Transverse colon (tissue), 4 donors: ENCODE measurements at regions of chr20 and their contacts with region 1.

Region 1: DNA sequence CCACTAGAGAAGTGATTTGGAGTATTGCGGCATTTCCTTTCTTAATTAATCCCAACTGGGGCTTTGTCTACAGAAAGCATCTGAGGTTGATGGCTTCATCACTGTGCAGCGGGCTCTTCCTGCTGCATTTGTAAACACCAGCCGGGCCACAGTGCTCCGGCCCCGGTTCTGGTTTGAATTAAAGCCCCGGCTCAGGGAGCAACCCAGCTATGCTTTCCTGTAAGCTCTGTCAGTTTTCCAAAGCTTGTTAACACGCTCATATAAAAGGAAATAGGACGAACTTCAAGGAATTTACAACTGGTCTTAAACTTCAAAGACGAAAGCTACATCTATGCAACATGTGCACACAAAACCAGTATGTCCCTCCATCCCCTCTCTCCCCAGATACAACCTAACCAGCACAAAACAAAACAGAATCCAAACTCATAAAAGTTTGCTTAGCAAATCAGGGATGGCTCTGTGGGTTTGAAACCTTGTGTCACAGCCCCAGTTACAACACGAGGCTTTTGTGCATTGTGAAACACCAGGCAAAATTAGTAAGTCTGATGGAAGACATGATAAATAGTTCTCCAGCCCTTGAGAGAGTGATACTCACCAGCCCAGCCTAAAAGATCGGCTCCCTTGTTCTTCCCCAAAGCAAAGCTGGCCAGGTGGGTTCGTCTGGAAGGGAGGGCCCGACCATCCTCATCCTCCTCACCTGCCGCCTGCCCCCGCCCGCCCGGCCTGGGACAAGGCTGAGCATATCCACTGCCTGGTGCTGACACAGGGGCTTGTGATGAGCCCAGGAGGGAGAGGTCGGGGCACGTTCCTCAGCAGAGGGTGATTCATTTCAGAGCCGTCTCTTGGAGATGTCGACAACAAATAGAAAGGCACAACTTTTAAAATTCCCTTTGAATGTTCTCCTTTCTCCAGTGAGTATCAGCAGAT is 197.9 kb downstream of the TFAP2C start:
- DNase-seq: no peak
- H3K4me3 ChIP-seq: no peak overlapping the region
- H3K27ac ChIP-seq: peak overlapping the region; percentile 68 to 88 (median 74)
- H3K4me1 ChIP-seq: peaks cover 0 to 5% (median 2%) of the 10 kb centered on the region in 4 donors
- H3K27me3 ChIP-seq: peaks cover 16% of the 10 kb centered on the region
- CTCF ChIP-seq: no peak
- EP300 ChIP-seq: peak; percentile 45
- POLR2A ChIP-seq: no peak

Region 2: DNA sequence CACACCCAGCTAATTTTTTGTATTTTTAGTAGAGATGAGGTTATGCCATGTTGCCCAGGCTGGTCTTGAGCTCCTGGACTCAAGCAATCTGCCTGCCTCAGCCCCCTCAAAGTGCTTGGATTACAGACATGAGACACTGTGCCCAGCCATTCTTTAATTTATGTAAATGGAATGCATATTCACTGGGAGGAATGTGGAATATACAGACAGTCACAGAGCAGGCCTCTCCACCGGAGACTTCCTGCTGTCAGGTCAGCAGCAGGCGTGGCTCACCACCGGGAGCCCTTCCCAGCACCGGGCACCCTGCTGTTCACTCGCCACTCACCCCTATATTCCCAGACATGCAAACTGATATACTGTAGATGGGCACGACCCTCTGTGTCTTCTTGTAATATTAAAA is 114.8 kb before region 1 on chr20:
- in situ Hi-C with region 1: no loop called
- intact Hi-C with region 1: no loop called
- DNase-seq: no peak
- H3K4me3 ChIP-seq: no peak overlapping the region
- H3K27ac ChIP-seq: no peak overlapping the region
- H3K4me1 ChIP-seq: no peaks in the 10 kb centered on the region
- H3K27me3 ChIP-seq: no peaks in the 10 kb centered on the region
- CTCF ChIP-seq: no peak
- EP300 ChIP-seq: no peak
- POLR2A ChIP-seq: no peak

Region 3: DNA sequence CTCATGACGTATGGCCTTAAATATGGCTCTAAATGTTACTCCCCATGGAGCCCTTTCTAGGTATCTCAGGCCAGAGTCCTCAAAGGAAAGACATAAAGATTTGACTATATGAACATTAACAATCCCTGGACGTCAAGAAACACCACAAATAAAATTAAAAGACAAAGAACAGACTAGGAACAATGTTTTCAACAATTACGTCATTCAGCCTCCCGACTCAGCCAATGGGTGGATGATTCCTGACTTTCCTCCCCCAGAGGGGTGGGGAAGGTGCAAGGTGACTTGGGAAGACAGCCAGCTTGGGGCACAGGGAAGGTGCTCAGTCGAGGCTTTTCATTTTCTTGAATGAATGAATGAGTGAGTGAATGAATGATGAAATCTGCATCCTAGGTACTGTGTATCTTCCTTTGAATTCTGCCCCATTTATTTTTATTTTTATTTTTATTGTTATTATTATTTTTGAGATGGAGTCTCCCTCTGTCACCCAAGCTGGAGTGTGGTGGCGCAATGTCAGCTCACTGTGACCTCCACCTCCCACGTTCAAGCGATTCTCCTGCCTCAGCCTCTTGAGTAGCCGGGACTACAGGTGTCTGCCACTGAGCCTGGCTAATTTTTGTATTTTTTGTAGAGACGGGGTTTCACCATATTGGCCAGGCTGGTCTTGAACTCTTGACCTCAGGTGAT is 40.3 kb before region 1 on chr20:
- in situ Hi-C with region 1: no loop called
- intact Hi-C with region 1: loop called (anchors 2 kb)
- DNase-seq: no peak
- H3K4me3 ChIP-seq: no peak overlapping the region
- H3K27ac ChIP-seq: peak overlapping the region; percentile 65 to 83 (median 76)
- H3K4me1 ChIP-seq: peaks cover 0 to 10% (median 0%) of the 10 kb centered on the region in 4 donors
- H3K27me3 ChIP-seq: no peaks in the 10 kb centered on the region
- CTCF ChIP-seq: no peak
- EP300 ChIP-seq: peak; percentile 55
- POLR2A ChIP-seq: no peak